Natural killer cell (primary cell): ENCODE measurements at regions of chr1 and their contacts with region 1.

Region 1: GRCh38 chr1:40774266-40774998 is 9.2 kb upstream of the KCNQ4 start:
- DNase-seq: peak; percentile 51 to 84
- ATAC-seq: peak; percentile 49 to 77 (median 66)
- H3K4me3 ChIP-seq: no peak overlapping the region
- H3K4me3 Mint-ChIP-seq: no peak overlapping the region
- H3K27ac ChIP-seq: no peak overlapping the region
- H3K27ac Mint-ChIP-seq: peak overlapping the region in 1 of 2 donors; percentile 10
- H3K4me1 ChIP-seq: no peaks in the 10 kb centered on the region
- H3K4me1 Mint-ChIP-seq: peaks cover 0 to 29% of the 10 kb centered on the region in 2 donors
- H3K27me3 ChIP-seq: no peaks in the 10 kb centered on the region
- H3K27me3 Mint-ChIP-seq: no peaks in the 10 kb centered on the region
- CTCF ChIP-seq: peak; percentile 72

Region 2: DNA sequence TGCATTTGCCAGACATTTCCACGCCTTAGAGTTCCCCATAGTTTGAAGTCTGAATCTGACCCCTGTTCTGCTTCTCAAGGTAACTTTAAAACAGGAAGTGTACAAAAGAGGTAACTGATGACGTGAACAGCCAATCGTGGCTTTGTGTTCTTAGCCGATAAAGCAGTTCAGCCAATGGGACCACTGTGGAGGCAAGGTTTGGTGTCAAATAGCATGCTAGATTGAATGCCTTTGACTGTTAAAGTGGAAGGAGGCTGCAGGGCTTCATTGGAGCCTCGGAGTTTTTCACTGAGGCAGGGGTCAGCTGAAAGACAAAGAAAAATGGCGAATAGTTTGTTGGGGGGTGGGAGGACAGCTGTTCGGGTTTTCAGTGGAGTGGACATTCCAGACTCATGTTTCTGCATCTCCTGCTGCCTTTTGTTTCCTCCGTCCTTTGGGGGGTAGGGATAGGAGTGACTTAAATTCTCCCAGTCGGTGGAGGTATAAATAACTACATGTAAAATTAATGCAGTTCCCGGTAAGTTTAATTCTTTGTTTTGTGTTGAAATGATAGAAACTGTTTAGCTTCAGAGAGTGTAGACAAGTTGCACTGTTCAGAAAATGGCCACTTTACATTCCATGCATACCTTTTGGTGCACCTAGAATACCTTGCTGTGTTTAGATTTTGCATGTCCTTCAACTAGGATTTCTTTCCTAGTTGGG is 65.2 kb before region 1 on chr1:
- intact Hi-C with region 1: no loop called
- DNase-seq: peak; percentile 60 to 93
- ATAC-seq: peak; percentile 91 to 96 (median 94)
- H3K4me3 ChIP-seq: peak overlapping the region; percentile 62
- H3K4me3 Mint-ChIP-seq: peak overlapping the region; percentile 99
- H3K27ac ChIP-seq: peak overlapping the region; percentile 76
- H3K27ac Mint-ChIP-seq: peak overlapping the region; percentile 97
- H3K4me1 ChIP-seq: peaks cover 18% of the 10 kb centered on the region
- H3K4me1 Mint-ChIP-seq: peaks cover 54 to 62% of the 10 kb centered on the region in 2 donors
- H3K27me3 ChIP-seq: no peaks in the 10 kb centered on the region
- H3K27me3 Mint-ChIP-seq: no peaks in the 10 kb centered on the region
- CTCF ChIP-seq: no peak

Region 3: DNA sequence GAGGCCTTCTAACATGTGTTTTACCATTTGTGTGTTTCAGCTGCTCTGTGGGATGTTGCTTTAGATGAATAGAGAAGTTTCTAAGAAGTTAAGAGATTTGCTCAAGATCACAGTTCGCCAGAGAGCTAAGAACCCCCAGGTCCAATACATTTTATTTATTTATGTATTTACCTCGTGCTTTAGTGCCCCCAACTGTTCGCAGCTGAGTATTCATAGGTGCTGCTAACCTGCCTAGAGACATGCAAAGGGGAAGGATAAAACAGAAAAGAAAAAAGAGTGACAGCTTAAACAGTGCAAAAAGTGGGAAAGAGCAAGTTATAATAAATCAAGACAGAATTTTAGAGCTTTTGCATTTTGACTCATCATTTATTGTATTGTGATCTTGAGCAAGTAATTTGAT is 51.8 kb before region 1 on chr1:
- intact Hi-C with region 1: no loop called
- DNase-seq: peak in 1 of 2 donors; percentile 23
- ATAC-seq: no peak
- H3K4me3 ChIP-seq: no peak overlapping the region
- H3K4me3 Mint-ChIP-seq: no peak overlapping the region
- H3K27ac ChIP-seq: no peak overlapping the region
- H3K27ac Mint-ChIP-seq: no peak overlapping the region
- H3K4me1 ChIP-seq: no peaks in the 10 kb centered on the region
- H3K4me1 Mint-ChIP-seq: peaks cover 26 to 39% of the 10 kb centered on the region in 2 donors
- H3K27me3 ChIP-seq: no peaks in the 10 kb centered on the region
- H3K27me3 Mint-ChIP-seq: no peaks in the 10 kb centered on the region
- CTCF ChIP-seq: no peak

Region 4: GRCh38 chr1:40849801-40850592 is 75.6 kb after region 1 on chr1:
- intact Hi-C with region 1: loop called (anchors 1 kb)
- DNase-seq: peak; percentile 74 to 88
- ATAC-seq: peak; percentile 91 to 97 (median 94)
- H3K4me3 ChIP-seq: no peak overlapping the region
- H3K4me3 Mint-ChIP-seq: peak overlapping the region; percentile 41
- H3K27ac ChIP-seq: no peak overlapping the region
- H3K27ac Mint-ChIP-seq: peak overlapping the region in 1 of 2 donors; percentile 44
- H3K4me1 ChIP-seq: peaks cover 8% of the 10 kb centered on the region
- H3K4me1 Mint-ChIP-seq: peaks cover 6 to 17% of the 10 kb centered on the region in 2 donors
- H3K27me3 ChIP-seq: no peaks in the 10 kb centered on the region
- H3K27me3 Mint-ChIP-seq: peaks cover 0 to 3% of the 10 kb centered on the region in 2 donors
- CTCF ChIP-seq: peak; percentile 93

Region 5: DNA sequence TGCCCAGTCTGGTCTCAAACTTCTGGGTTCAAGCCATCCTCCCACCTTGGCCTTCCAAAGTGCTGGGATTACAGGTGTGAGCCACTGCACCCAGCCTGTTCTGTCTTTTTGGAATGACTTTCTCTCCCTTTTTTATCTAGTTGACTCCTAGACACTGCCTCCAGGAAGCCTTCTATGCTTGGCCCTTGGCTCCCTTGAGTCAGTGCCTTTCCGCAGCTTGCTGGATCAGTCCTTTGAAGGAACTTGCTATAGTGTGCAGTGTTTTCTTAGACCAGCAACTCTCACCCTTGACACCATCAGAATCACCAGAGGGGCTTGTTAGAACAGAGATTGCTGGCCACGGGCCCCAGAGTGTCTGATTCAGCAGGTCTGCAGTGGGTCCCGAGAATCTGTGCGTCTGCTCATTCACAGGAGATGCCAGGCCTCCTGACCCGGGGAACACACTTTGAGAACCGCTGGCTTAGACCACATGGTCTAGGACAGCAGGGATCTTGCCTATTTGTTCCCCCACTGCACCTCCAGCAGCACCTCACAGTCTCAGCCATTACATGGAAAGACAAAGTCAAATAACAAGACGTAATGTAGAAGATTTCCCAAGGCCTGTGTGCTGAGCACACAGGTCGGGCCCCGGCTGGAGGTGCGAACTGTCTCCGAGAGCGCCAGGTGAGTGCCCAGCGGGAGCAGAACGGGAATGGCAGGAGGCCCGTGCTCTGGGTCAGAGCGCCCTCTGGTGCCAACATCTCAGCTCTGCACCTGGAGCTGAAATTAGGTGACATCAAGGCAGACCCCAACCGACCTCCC is 177.7 kb after region 1 on chr1:
- intact Hi-C with region 1: loop called (anchors 1 kb)
- DNase-seq: peak; percentile 52 to 76
- ATAC-seq: peak; percentile 64 to 82 (median 75)
- H3K4me3 ChIP-seq: no peak overlapping the region
- H3K4me3 Mint-ChIP-seq: no peak overlapping the region
- H3K27ac ChIP-seq: no peak overlapping the region
- H3K27ac Mint-ChIP-seq: no peak overlapping the region
- H3K4me1 ChIP-seq: peaks cover 6% of the 10 kb centered on the region
- H3K4me1 Mint-ChIP-seq: peaks cover 0 to 17% of the 10 kb centered on the region in 2 donors
- H3K27me3 ChIP-seq: no peaks in the 10 kb centered on the region
- H3K27me3 Mint-ChIP-seq: peaks cover 22 to 25% of the 10 kb centered on the region in 2 donors
- CTCF ChIP-seq: peak; percentile 85